Activated T-helper 2 cell treated with anti-CD3 and anti-CD28 coated beads, Interferon-gamma antibody, Interleukin-2, Interleukin-4, amounts not matched to agents 10 μg/mL and 5 μg/mL and 100 μg/mL, durations not matched to agents 14 hours and 24 hours and 36 hours (primary cell): ENCODE measurements at regions of chr6 and their contacts with region 1.

Region 1: GRCh38 chr6:43263314-43264178 is 20.3 kb downstream of the TTBK1 start:
- DNase-seq: peak; percentile 60
- H3K4me3 Mint-ChIP-seq: no peak overlapping the region
- H3K27ac Mint-ChIP-seq: no peak overlapping the region
- H3K4me1 Mint-ChIP-seq: no peaks in the 10 kb centered on the region
- H3K27me3 Mint-ChIP-seq: peaks cover 4% of the 10 kb centered on the region

Region 2: DNA sequence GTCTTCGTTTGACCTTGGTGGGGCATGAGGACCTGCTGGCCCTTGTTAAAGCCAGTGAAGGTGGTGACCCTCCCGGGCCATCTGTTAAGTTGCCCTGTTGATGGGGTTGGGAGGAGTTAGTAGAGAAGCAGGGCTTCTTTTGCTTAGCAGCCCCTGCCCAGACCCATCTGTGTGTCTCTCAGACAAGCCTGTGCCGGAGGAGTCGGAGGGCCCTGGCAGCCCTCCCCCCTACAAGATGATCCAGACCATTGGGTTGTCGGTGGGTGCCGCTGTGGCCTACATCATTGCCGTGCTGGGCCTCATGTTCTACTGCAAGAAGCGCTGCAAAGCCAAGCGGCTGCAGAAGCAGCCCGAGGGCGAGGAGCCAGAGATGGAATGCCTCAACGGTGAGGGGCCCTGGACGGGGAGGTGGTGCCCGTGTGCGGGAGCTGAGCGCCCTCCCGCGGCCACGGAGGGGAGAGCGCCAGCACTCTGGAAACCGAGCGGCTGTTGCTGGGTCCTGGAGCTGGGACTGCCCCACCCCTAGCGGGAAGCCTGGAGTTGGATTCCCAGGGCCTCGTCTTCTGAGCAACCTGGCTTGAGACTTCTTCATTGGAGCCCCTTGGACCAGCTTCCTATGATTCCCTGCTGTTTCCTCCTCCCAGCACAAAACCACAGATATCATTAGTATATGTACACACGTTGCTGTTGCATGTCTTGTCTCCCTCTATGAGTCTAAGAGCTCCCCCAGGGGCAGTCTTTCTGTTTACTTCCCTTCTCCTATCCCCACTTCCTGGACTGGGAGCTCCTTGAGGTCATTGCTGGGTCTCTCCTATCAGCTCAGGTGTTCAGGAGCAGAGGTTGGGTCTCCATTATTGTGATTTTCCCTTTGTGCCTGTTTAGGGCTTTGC is 120.1 kb before region 1 on chr6:
- intact Hi-C with region 1: no loop called
- DNase-seq: peak; percentile 70
- H3K4me3 Mint-ChIP-seq: no peak overlapping the region
- H3K27ac Mint-ChIP-seq: peak overlapping the region; percentile 25
- H3K4me1 Mint-ChIP-seq: peaks cover 8% of the 10 kb centered on the region
- H3K27me3 Mint-ChIP-seq: no peaks in the 10 kb centered on the region

Region 3: DNA sequence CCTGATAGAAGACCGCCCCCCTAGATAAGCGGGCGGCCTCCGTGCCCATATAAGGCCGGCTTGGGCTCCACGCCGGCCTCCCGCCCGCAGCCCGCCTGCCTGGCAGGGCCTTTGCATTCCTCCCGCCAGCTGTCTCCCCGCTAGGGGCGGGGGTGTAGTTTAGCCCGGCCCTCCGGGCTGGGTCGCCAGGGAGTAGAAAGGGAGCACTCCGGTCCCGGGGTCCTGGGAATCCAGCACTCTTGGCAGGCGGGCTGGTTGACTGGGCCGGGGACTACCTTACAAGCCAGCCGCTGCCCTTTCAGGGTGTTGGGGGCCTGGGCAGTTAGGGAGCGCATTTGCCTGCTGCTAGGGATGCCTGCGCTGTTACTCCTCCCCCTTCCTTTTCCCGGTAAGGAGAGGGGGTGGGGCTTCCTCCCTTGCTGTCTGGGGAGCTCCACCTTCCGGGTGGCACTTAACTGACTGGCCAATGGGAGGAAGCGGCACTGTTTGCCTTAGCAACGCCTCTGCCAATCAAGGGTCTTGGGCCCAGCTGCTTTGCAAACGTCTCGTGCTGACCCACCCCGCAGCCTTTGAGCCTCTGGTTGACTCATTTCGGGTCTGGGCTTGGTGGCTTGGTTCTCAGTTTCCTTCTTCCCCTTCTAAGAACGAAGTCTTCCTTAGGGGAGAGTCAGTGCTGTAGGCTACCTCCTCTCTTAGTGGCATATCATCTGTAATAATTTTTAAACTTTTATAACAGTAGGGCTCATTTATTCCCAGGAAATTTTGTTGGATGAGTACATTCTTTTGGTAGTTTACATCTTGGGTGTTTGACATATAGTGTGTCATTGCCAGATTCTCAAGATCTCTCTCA is 89.1 kb before region 1 on chr6:
- intact Hi-C with region 1: no loop called
- DNase-seq: peak; percentile 96
- H3K4me3 Mint-ChIP-seq: peak overlapping the region; percentile 99
- H3K27ac Mint-ChIP-seq: peak overlapping the region; percentile 64
- H3K4me1 Mint-ChIP-seq: peaks cover 40% of the 10 kb centered on the region
- H3K27me3 Mint-ChIP-seq: no peaks in the 10 kb centered on the region

Region 4: DNA sequence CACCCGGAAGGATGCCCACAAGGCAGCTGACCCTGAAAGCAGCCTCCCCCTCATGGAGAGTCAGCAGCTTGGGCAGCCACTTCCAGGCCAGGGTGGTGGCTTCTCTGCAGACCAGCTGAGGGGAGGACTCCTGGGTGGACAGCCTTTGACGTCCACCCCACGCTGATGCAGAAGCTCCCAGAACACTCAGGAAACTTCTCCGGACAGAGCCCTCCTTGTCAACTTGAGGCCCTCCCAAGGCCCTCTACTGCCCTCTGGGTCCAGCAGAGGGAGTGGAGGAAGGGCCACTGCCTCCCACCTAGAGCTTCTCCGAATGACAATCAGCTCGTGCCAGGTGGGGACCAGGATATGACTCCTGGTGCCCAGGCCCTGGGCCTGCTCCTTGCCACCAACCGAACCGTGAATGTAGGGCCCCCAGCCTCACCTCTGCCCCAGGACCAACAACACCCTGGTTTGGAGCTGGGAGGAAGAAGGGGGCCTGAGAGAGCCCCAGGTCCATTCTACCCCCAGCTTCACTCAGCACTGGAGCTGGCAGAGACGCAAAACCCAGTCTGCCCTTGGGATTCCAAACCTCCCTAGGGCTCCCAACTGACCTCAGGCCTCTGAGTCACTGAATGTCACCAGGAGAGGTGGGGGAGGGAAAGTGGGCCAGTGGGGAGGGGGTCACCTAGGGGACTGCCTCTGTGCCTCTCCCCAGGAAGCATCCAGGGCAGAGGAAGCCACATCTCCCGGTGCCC is 23.6 kb after region 1 on chr6:
- intact Hi-C with region 1: no loop called
- DNase-seq: no peak
- H3K4me3 Mint-ChIP-seq: no peak overlapping the region
- H3K27ac Mint-ChIP-seq: no peak overlapping the region
- H3K4me1 Mint-ChIP-seq: no peaks in the 10 kb centered on the region
- H3K27me3 Mint-ChIP-seq: peaks cover 26% of the 10 kb centered on the region

Region 5: DNA sequence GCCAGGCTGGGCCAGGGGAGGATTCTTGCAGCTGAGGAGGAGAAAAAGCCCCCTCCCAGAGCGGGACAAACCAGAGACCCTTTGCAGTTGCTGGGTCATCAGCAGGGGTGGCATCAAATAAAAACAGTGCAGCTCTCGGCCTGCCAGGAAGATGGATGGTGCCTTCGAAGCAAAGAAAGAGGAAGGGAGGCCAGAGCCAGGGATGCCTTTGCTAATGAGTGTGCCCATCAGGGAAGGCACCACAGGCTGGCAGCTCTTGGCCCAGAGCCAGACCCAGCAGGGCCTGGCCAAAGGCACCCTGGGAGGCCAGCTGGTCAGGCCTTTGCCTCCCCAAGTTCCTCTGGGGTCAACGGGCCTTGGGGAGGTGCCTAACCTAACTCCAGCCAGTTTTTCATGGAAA is 132.2 kb after region 1 on chr6:
- intact Hi-C with region 1: loop called (anchors 5 kb)
- DNase-seq: no peak
- H3K4me3 Mint-ChIP-seq: no peak overlapping the region
- H3K27ac Mint-ChIP-seq: no peak overlapping the region
- H3K4me1 Mint-ChIP-seq: peaks cover 14% of the 10 kb centered on the region
- H3K27me3 Mint-ChIP-seq: peaks cover 44% of the 10 kb centered on the region